A673 (cell line): ENCODE measurements at regions of chr19 and their contacts with region 1.

Region 1: DNA sequence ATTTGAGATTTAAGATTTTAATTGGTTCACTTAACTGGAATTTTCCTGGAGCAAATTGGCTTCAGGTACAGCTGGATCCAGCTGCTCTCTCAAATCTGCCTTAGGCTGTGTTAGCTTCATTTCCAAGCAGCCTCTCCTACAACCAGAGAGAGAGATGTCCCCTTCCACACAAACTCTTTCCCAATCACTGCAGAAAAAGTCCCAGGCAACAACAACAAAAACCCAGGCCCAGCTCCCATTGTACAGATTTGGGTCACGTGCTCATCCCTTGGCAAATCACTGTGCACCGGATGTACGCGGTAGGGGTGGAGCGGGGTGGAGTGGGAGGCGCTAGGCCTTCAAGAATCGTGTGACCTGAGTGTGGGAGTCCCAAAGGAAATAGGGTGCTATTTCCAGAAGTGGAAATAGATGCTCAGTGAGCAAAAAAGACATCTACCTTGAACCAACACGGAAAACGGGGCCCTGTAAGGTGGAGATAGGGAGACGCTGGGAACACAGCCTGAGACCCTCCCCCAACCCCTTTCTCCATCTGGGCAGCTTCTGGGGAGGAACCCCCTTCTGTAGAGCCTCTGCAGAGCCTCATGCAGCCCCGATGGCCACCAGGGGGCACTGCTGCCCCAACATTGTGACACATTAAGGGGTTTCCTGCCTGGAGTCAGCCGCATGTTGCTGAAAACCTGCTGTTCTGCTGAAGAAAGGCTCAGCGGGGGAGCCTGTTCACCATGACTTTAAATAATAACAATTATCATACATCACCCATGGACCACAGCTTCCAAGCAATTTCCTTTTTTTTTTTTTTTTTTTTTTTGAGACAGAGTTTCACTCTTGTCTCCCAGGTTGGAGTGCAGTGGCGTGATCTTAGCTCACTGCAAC is 25.4 kb downstream of the HPN start:
- DNase-seq: peak; percentile 92
- H3K4me3 ChIP-seq: no peak overlapping the region
- H3K27ac ChIP-seq: no peak overlapping the region
- H3K4me1 ChIP-seq: no peaks in the 10 kb centered on the region
- H3K27me3 ChIP-seq: no peaks in the 10 kb centered on the region
- CTCF ChIP-seq: peak; percentile 96

Region 2: GRCh38 chr19:34999498-35000341 is 67.2 kb before region 1 on chr19 and contains the start of gene GRAMD1A:
- CTCF ChIA-PET with region 1: interaction called, 10 read pairs
- POLR2A ChIA-PET with region 1: no interaction called
- intact Hi-C with region 1: no loop called
- DNase-seq: peak; percentile 88
- H3K4me3 ChIP-seq: peak within 1 kb of the TSS; percentile 89
- H3K27ac ChIP-seq: peak within 1 kb of the TSS; percentile 82
- H3K4me1 ChIP-seq: peaks cover 16% of the 10 kb centered on the region
- H3K27me3 ChIP-seq: no peaks in the 10 kb centered on the region
- CTCF ChIP-seq: no peak
- total RNA-seq, gene GRAMD1A: 87.3 and 101 TPM in 2 replicates

Region 3: DNA sequence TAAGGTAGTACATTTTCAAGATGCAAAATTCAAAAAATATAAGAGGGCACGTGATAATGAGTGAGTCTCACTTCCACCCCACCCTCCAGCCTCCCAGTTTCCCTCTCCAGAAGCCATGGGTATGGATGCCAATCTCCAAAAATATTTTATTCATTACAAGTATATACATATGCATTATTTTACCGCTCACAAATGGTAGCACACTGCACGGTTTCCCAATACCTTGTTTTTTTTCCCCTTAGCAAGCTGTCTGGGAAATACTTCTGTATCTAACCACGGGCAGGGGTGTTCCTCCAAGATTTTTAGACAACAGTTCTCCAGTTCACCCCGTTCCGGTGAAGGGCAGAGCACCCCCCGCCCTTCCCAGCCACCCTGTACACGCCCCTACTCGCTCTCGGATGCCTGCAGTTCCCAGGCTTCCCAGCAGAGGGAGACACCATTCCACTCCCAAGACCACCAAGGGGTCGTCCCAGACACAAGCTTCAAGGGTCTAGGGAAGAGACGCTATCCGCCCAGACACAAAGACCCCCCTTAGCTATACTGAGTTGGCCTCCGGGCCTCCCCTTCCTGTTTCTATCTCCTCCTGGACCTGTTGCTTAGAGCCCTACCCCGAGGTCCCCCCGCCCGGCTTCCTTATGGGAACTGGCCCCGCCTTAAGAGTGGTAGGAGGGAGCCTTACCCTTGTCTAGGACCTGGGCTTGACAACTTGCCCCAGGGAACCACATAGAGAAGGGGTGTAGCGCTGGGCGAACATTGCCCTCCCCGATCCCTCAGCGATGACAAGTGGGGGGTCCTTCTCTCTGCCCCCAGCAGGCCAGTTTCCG is 47.6 kb after region 1 on chr19:
- CTCF ChIA-PET with region 1: no interaction called
- POLR2A ChIA-PET with region 1: no interaction called
- intact Hi-C with region 1: loop called (anchors 1 kb)
- DNase-seq: peak; percentile 76
- H3K4me3 ChIP-seq: peak overlapping the region; percentile 35
- H3K27ac ChIP-seq: no peak overlapping the region
- H3K4me1 ChIP-seq: no peaks in the 10 kb centered on the region
- H3K27me3 ChIP-seq: no peaks in the 10 kb centered on the region
- CTCF ChIP-seq: peak; percentile 97

Region 4: GRCh38 chr19:35135389-35135909 is 68.5 kb after region 1 on chr19:
- CTCF ChIA-PET with region 1: no interaction called
- POLR2A ChIA-PET with region 1: no interaction called
- intact Hi-C with region 1: loop called (anchors 2 kb)
- DNase-seq: peak; percentile 72
- H3K4me3 ChIP-seq: no peak overlapping the region
- H3K27ac ChIP-seq: no peak overlapping the region
- H3K4me1 ChIP-seq: no peaks in the 10 kb centered on the region
- H3K27me3 ChIP-seq: no peaks in the 10 kb centered on the region
- CTCF ChIP-seq: peak; percentile 83

Region 5: GRCh38 chr19:35184884-35185283 is 118.0 kb after region 1 on chr19:
- CTCF ChIA-PET with region 1: no interaction called
- POLR2A ChIA-PET with region 1: no interaction called
- intact Hi-C with region 1: no loop called
- DNase-seq: no peak
- H3K4me3 ChIP-seq: no peak overlapping the region
- H3K27ac ChIP-seq: no peak overlapping the region
- H3K4me1 ChIP-seq: no peaks in the 10 kb centered on the region
- H3K27me3 ChIP-seq: no peaks in the 10 kb centered on the region
- CTCF ChIP-seq: no peak